ENCODE measurements at regions of chr6 and their contacts with region 1.

Region 1: GRCh38 chr6:12895721-12896120 is 179.2 kb downstream of the PHACTR1 start:
- DNase-seq: no peak

Region 2: DNA sequence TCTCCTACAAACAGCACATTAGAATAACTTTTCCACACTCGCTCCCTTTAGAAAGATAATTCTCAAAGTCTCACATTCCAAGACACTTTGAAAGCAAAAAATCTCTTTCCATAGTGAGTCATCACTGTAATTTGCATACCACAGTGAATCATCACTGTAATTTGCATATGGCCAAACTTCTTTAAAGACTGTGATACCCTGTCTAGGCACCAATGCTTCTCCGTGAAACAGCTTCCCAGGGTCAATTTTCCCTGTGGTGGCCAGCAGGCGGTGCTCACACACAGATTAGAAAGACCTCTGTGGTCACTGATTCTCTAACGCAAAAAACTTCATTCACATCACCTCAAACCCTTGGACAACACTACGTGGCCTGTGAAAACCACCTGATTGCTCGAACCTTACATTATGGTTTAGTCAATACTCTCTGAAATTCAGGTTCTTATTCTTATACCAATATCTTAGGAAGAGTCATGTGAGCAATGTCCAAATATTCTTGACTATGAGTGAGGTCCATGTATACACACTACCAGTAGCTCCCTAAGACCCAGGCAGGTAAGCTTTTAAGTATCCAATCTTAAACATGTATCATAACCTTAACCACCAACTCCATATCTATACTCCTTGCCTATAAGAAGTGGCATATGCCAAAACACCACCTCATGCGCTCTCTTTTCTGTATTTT is 257.6 kb before region 1 on chr6:
- intact Hi-C with region 1: loop called (anchors 2 kb)
- DNase-seq: peak in 8 of 10 donors; percentile 38 to 92 (median 56)

Region 3: GRCh38 chr6:12832226-12832735 is 63.4 kb before region 1 on chr6:
- intact Hi-C with region 1: no loop called
- DNase-seq: no peak

Region 4: GRCh38 chr6:13593720-13594119 is 698.0 kb after region 1 on chr6:
- intact Hi-C with region 1: no loop called
- DNase-seq: no peak

Measured in posterior cingulate gyrus (tissue), 11 donors.